Upper lobe of right lung (tissue), 1 donor: ENCODE measurements at regions of chr13 and their contacts with region 1.

Region 1: GRCh38 chr13:110216398-110217041 is 90.4 kb downstream of the COL4A1 start:
- DNase-seq: no peak
- ATAC-seq: peak; percentile 38
- H3K4me3 ChIP-seq: no peak overlapping the region
- H3K27ac ChIP-seq: peak overlapping the region; percentile 37
- H3K4me1 ChIP-seq: peaks cover 37% of the 10 kb centered on the region
- H3K27me3 ChIP-seq: no peaks in the 10 kb centered on the region
- CTCF ChIP-seq: no peak

Region 2: DNA sequence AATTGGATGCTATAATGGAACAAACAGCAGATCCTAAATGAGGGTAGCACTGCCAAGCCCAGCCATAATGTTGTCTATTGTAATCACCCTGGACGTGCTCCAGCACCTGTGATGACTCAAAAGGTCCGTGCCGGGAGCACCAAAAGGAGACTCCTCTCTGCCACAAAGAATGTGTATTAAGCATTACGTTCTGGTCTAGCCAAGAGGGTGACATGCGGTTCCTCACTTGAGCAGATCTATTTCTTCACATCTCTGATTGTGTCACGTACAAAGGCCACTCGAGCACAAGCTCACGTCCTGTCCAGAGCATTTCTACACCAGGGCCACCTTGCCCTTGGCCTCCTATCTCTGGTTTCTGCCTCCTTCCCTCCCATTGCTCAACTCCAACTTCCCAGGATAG is 210.2 kb before region 1 on chr13:
- intact Hi-C with region 1: no loop called
- DNase-seq: no peak
- ATAC-seq: no peak
- H3K4me3 ChIP-seq: no peak overlapping the region
- H3K27ac ChIP-seq: no peak overlapping the region
- H3K4me1 ChIP-seq: no peaks in the 10 kb centered on the region
- H3K27me3 ChIP-seq: no peaks in the 10 kb centered on the region
- CTCF ChIP-seq: no peak

Region 3: DNA sequence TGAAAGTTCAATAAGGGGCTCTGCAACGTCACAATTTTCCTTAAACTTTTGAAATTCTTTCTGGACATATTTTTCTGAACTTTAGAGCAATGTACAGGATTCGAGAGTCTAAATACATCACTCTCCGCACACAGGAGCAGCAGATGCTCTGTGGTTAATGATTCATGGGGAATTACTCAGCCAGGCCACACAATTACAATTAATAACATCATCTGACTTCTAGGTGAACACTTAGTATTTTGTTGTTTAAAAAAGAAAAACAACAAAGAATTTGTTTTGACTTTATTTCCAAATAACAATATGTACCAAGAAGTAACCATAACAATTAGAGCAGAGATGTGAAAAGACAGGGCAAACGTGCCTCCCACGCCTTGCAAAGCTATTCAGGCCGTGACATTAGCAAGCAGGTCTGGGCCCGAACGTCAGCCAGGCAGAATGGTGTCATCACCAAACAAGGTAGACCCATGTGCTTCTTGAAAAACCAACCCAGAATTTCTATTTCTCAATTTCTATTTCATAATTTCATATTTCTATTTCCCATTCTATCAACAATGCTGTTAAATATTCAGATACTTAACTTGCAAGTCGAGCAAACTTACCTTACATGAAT is 145.9 kb before region 1 on chr13:
- intact Hi-C with region 1: no loop called
- DNase-seq: no peak
- ATAC-seq: no peak
- H3K4me3 ChIP-seq: no peak overlapping the region
- H3K27ac ChIP-seq: no peak overlapping the region
- H3K4me1 ChIP-seq: no peaks in the 10 kb centered on the region
- H3K27me3 ChIP-seq: no peaks in the 10 kb centered on the region
- CTCF ChIP-seq: no peak

Region 4: DNA sequence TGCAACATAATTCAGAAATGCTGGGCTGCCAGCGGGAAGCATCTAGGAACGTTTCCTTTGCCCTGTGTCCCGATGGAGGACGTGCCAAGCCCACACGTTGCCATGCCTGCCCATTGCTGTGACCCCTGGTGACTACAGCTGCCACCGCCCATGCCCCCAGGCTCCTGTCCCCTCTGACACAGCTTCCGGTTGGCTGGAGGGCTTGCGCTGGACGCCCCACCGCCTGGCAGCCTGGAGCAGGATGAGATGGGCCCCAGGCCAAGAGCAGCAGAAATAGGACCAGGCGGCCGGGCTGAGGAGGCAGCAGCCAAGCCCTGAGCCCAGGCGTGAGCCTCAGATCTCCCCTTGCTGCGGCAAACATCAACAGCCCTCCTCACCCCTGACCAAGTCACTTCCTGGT is 216.5 kb after region 1 on chr13:
- intact Hi-C with region 1: loop called (anchors 10 kb)
- DNase-seq: no peak
- ATAC-seq: peak; percentile 62
- H3K4me3 ChIP-seq: no peak overlapping the region
- H3K27ac ChIP-seq: no peak overlapping the region
- H3K4me1 ChIP-seq: no peaks in the 10 kb centered on the region
- H3K27me3 ChIP-seq: no peaks in the 10 kb centered on the region
- CTCF ChIP-seq: no peak